GM13977 (cell line): ENCODE measurements at regions of chr12 and their contacts with region 1.

Region 1: GRCh38 chr12:69585189-69586062 is at the start of gene CCT2:
- DNase-seq: peak; percentile 94
- CTCF ChIP-seq: peak; percentile 38

Region 2: GRCh38 chr12:69388371-69388770 is 197.1 kb before region 1 on chr12:
- in situ Hi-C with region 1: loop called (anchors 25 kb)
- DNase-seq: peak; percentile 11
- CTCF ChIP-seq: peak; percentile 45

Region 3: DNA sequence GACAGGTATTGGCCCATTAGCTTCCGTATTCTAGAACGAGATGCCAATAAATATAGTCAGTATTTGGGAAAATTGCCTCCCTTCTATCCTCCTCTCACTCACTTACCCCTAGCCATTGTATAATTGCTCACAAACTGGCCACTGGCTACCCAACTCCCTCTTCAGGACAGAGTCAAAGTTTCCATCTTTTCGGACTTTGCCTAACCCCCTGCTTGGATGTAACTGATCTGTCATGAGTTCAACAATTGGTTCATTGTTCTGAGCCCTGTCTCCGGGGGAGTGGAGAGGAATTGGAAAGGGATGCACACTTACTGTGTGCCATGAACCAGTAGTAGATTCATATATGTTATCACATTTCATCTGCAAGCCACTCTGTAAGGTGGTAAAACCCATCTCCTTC is 251.8 kb after region 1 on chr12:
- in situ Hi-C with region 1: no loop called
- DNase-seq: no peak
- CTCF ChIP-seq: no peak